ENCODE measurements at regions of chr11 and their contacts with region 1.

Region 1: DNA sequence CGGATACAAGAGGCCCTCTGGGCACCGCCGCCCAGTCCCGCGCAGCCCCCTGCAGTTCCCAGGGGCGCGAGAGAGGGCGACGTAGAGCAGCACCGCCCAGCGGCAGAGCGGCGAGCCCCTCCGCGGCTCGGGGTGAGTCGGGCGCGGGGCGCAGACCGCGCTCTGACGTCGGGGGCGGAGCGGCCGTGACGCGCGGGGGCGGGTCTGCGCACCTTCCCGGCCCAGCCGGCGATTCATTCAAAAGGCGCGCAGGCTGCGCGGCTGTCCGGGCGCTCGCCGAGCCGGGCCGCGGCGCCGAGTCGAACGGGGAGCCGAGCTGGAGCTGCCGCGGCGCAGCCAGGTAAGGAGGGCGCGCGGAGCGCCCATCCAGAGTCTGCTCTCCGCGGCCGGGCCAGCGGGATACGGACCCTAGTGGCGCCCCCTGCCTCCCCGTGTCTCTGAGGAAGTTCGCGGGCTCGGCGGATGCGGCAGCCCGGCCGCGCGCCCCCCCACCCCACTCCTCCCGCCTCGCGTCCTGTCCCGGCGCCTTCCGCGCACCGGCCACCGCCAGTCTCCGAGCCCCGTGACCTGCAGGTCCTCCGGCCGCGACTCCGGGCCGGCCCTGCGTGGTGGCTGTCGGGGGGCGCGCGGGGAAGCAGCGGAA is at the start of gene RELT:
- DNase-seq: peak; percentile 87
- H3K4me3 ChIP-seq: peak within 1 kb of the TSS; percentile 69 to 74
- H3K27ac ChIP-seq: peak within 1 kb of the TSS; percentile 29 to 85
- H3K4me1 ChIP-seq: no peaks in the 10 kb centered on the region
- H3K27me3 ChIP-seq: no peaks in the 10 kb centered on the region
- CTCF ChIP-seq: peak; percentile 93 to 94 (median 94)
- POLR2A ChIP-seq: peak; percentile 11
- total RNA-seq, gene RELT: 8.4 to 8.6 TPM

Region 2: DNA sequence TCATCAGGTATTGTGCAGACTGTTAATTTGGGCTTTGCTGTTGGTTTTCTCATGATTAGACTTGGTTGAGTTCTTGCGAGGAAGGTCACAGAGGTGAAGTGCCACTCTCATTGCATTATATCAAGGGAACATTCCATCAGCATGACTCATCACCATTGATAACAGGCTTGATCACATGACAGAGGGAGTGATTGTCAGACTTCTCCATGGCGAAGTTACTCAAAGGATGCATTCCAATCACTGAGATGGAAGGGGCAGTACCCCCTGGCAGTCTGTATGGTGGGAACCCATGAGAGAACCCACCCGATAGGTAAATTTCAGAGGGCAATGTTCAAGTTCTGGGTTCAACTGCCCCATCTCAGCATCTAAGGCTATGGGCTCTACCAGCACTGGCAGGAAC is 177.6 kb before region 1 on chr11:
- intact Hi-C with region 1: no loop called
- DNase-seq: no peak
- H3K4me3 ChIP-seq: no peak overlapping the region
- H3K27ac ChIP-seq: no peak overlapping the region
- H3K4me1 ChIP-seq: no peaks in the 10 kb centered on the region
- H3K27me3 ChIP-seq: no peaks in the 10 kb centered on the region
- CTCF ChIP-seq: no peak
- POLR2A ChIP-seq: no peak

Region 3: GRCh38 chr11:73307323-73308002 is 68.8 kb before region 1 on chr11:
- intact Hi-C with region 1: loop called (anchors 10 kb)
- DNase-seq: peak; percentile 99
- H3K4me3 ChIP-seq: peak overlapping the region; percentile 70 to 83
- H3K27ac ChIP-seq: peak overlapping the region; percentile 94 to 96
- H3K4me1 ChIP-seq: peaks cover 13% of the 10 kb centered on the region
- H3K27me3 ChIP-seq: no peaks in the 10 kb centered on the region
- CTCF ChIP-seq: peak; percentile 90 to 95 (median 93)
- POLR2A ChIP-seq: no peak